Endothelial cell of umbilical vein (primary cell): ENCODE measurements at regions of chr18 and their contacts with region 1.

Region 1: DNA sequence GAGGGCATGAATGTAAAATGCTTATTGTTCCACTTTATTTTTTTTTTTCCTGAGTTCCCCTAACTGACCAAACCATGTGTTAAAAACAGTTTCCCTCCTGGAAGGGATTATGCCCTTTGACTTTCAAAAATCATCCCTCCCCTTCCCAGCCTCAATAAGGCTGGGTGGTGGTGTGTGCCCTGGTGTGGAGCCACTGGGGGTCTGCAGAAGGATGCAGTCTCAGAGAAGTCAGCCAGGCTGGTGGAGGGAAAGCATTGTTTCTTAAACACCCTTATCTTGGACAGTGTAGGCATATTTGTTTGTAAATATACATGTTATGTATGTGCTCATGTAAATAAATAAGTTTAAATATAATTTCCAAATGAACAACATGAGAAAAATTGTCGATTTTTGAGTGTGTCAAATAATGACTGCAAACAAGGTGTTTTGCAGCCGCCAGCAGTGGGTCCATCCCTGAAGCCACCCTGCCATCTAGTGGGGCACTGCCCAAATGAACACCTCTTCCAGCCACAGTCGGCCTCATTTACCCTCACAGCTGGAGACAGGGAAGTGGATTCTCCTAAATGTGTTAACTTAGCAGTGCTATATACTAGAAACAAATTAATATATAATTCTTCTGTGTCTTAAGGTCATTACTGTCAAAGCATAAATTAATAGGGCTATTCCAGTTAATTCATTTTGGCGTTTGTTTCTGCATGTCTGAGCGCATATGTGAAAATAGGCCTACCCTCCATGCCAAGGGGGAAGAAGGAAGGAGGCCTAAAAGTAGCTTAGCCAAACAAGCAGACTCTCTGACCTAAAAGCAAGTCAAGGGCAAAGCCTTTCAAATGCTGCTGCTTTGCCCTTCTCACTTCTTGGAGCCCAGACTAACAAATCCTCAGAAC is 209.6 kb upstream of the PIK3C3 start:
- DNase-seq: peak; percentile 71
- H3K4me3 ChIP-seq: no peak overlapping the region
- H3K27ac ChIP-seq: no peak overlapping the region
- H3K4me1 ChIP-seq: peaks cover 2% of the 10 kb centered on the region
- H3K27me3 ChIP-seq: no peaks in the 10 kb centered on the region
- CTCF ChIP-seq: peak; percentile 64 to 78
- POLR2A ChIP-seq: no peak

Region 2: DNA sequence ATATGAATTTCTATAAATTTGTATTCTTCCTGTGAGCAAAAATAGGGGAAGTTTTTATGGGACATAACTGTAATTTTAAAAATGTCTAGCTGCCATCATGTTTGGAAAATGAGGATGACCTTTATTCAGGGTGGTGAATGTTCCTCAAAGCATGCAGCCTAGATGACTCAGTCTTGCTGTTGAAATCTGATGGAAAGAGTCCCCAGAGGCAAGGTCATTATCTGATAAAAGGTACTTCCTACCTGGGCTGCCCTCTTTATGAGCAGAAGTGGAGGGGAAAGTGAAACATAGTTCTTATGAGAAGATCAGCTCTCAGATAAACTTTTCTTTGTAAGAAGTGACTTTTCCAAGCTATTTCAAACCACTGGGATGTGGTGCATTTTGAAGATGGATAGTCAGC is 935.0 kb before region 1 on chr18:
- CTCF ChIA-PET with region 1: no interaction called
- POLR2A ChIA-PET with region 1: no interaction called
- dilution Hi-C with region 1: no loop called
- intact Hi-C with region 1: loop called (anchors 10 kb)
- DNase-seq: no peak
- H3K4me3 ChIP-seq: no peak overlapping the region
- H3K27ac ChIP-seq: no peak overlapping the region
- H3K4me1 ChIP-seq: no peaks in the 10 kb centered on the region
- H3K27me3 ChIP-seq: no peaks in the 10 kb centered on the region
- CTCF ChIP-seq: no peak
- POLR2A ChIP-seq: no peak

Region 3: GRCh38 chr18:41391616-41392595 is 353.5 kb before region 1 on chr18:
- CTCF ChIA-PET with region 1: interaction called, 3 read pairs
- POLR2A ChIA-PET with region 1: no interaction called
- dilution Hi-C with region 1: no loop called
- intact Hi-C with region 1: loop called (anchors 1 kb)
- DNase-seq: peak; percentile 54
- H3K4me3 ChIP-seq: peak overlapping the region in 1 of 3 experiments; percentile 13
- H3K27ac ChIP-seq: no peak overlapping the region
- H3K4me1 ChIP-seq: no peaks in the 10 kb centered on the region
- H3K27me3 ChIP-seq: no peaks in the 10 kb centered on the region
- CTCF ChIP-seq: peak; percentile 35 to 62
- POLR2A ChIP-seq: no peak

Region 4: GRCh38 chr18:41594582-41594981 is 150.8 kb before region 1 on chr18:
- CTCF ChIA-PET with region 1: no interaction called
- POLR2A ChIA-PET with region 1: no interaction called
- dilution Hi-C with region 1: no loop called
- intact Hi-C with region 1: loop called (anchors 10 kb)
- DNase-seq: no peak
- H3K4me3 ChIP-seq: no peak overlapping the region
- H3K27ac ChIP-seq: no peak overlapping the region
- H3K4me1 ChIP-seq: no peaks in the 10 kb centered on the region
- H3K27me3 ChIP-seq: no peaks in the 10 kb centered on the region
- CTCF ChIP-seq: no peak
- POLR2A ChIP-seq: no peak

Region 5: DNA sequence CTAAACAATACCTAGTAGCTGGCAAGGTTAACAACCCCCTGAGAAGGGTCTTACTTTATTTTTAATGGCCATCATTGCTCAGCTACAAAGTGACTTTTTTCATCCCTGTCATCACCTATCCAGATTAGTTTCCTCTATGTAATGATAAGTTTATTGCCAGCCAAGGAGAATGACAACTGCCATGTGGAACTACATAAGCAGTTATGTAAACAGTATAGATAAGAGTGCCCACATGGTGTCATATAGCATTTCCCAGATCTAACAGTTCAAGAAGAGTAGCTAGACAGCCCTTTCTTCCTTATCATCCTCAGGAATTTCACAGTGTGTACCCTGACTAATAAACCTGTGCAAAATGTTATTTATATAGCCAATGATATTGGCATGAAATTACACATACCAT is 30.5 kb before region 1 on chr18:
- CTCF ChIA-PET with region 1: no interaction called
- POLR2A ChIA-PET with region 1: no interaction called
- dilution Hi-C with region 1: no loop called
- intact Hi-C with region 1: no loop called
- DNase-seq: no peak
- H3K4me3 ChIP-seq: no peak overlapping the region
- H3K27ac ChIP-seq: no peak overlapping the region
- H3K4me1 ChIP-seq: peaks cover 5% of the 10 kb centered on the region
- H3K27me3 ChIP-seq: no peaks in the 10 kb centered on the region
- CTCF ChIP-seq: no peak
- POLR2A ChIP-seq: no peak

Region 6: DNA sequence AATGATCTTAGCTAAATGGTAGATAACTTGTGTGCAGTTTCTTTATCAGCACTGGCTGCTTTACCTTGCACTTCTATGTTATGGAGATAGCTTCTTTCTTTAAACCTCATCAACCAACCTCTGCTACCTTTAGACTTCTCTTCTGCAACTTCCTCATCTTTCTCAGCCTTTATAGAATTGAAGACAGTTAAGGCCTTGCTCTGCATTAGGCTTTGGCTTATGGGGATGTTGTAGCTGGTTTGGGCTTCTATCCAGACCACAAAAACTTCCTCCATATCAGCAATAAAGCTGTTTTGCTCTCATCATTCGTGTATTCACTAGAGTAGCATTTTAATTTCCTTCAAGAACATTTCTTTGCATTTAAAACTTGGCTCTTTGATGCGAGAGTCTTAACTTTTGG is 333.3 kb after region 1 on chr18:
- CTCF ChIA-PET with region 1: no interaction called
- POLR2A ChIA-PET with region 1: no interaction called
- dilution Hi-C with region 1: no loop called
- intact Hi-C with region 1: no loop called
- DNase-seq: no peak
- H3K4me3 ChIP-seq: no peak overlapping the region
- H3K27ac ChIP-seq: no peak overlapping the region
- H3K4me1 ChIP-seq: no peaks in the 10 kb centered on the region
- H3K27me3 ChIP-seq: no peaks in the 10 kb centered on the region
- CTCF ChIP-seq: no peak
- POLR2A ChIP-seq: no peak